HEK293 (cell line): ENCODE measurements at regions of chr13 and their contacts with region 1.

Region 1: DNA sequence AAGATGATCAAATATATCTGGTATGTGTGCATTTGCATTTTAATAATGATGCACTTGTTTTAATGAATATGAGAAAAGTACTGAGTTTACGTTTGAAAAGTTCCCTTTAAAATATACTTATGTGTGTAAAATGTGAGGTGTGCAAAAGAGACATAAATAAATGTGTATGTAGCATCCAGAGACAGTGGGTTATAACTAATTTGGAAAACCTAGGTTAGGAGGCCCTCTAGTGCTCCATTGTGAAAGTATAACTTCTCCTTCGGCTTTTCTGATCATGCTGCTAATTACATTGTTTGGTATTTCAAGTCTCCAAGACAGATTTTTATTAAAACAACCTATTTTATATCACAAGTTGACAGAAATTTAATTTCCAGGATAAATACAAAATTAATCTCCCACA is 30.1 kb downstream of the SCEL start:
- H3K4me3 ChIP-seq: no peak overlapping the region
- H3K27ac ChIP-seq: no peak overlapping the region
- H3K4me1 ChIP-seq: no peaks in the 10 kb centered on the region
- CTCF ChIP-seq: no peak

Region 2: GRCh38 chr13:77480066-77480465 is 85.6 kb before region 1 on chr13:
- CTCF ChIA-PET with region 1: interaction called, 19 read pairs
- POLR2A ChIA-PET with region 1: no interaction called
- H3K4me3 ChIP-seq: no peak overlapping the region
- H3K27ac ChIP-seq: no peak overlapping the region
- H3K4me1 ChIP-seq: no peaks in the 10 kb centered on the region
- CTCF ChIP-seq: no peak

Region 3: GRCh38 chr13:77492982-77493381 is 72.7 kb before region 1 on chr13:
- CTCF ChIA-PET with region 1: interaction called, 34 read pairs
- POLR2A ChIA-PET with region 1: no interaction called
- H3K4me3 ChIP-seq: no peak overlapping the region
- H3K27ac ChIP-seq: no peak overlapping the region
- H3K4me1 ChIP-seq: no peaks in the 10 kb centered on the region
- CTCF ChIP-seq: no peak

Region 4: DNA sequence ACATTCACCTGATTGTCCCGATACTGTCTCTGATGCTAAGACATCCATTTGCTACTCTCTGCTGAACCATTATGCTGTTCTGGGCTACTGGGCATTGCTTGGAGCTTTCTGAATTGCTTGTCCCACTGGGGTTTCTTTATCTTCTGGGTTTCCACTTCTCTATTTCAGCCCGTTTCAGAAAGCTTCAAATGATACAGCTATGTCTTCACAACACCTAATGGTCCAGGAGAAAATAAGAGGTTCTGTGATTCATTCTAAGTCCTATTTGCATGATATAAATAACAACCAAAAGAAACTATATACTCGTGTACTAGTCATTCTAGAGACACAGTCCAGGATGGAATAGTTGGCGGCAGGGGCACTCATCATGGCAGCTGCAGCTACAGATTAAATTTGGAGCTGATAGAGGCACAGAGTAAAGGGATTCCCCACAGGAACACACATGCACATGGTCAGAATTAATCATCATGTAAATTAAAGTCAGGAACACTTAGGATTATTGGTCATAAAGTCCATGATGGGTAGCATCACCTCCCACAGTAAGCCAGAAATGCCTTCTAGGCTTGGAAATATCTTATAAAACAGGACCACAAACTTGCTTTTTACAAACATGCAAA is 63.4 kb before region 1 on chr13:
- CTCF ChIA-PET with region 1: interaction called, 10 read pairs
- POLR2A ChIA-PET with region 1: no interaction called
- H3K4me3 ChIP-seq: no peak overlapping the region
- H3K27ac ChIP-seq: no peak overlapping the region
- H3K4me1 ChIP-seq: no peaks in the 10 kb centered on the region
- CTCF ChIP-seq: no peak

Region 5: GRCh38 chr13:77544355-77544754 is 21.3 kb before region 1 on chr13:
- CTCF ChIA-PET with region 1: no interaction called
- POLR2A ChIA-PET with region 1: no interaction called
- H3K4me3 ChIP-seq: no peak overlapping the region
- H3K27ac ChIP-seq: no peak overlapping the region
- H3K4me1 ChIP-seq: no peaks in the 10 kb centered on the region
- CTCF ChIP-seq: no peak